Left lung (tissue), 14 donors: ENCODE measurements at regions of chr11 and their contacts with region 1.

Region 1: DNA sequence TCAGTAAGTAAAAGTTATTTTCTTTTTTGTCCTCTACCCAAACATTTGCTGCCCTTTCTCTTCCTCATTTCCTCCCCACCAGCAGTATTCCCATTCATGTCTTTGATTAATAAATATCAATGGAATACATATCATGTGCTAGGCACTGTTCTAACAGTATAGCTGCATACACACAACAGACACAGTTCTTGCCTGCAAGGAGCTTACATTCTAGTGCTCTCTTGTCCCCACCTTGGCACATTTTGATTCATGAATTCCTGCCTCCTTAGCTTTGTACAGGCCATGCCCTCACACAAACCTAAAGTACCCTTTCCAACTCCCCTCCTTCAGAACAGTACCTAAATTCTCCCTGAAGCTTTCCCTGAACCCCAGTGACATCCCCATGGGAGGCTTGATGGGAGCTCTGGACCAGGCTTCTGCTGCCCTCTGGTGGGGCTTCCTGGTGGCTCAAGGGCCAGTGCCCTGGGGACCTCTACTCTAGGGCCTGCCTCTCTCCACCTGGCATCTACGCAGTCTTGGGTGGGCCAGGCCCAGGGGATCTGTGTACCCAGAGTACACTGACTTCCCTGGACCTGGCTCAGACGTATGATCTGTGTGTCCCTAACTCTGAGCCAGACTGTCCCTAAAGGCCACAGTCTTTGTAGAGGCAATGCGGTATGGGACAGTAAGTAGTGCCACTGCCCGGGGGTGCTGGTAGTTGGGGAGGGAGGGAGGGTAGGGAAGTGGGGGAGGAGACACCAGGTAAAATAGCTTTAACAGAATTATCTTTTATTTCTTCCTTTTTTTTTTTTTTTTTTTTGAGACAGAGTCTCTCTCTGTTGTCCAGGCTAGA is 14.1 kb downstream of the RPS13 start:
- DNase-seq: peak; percentile 17 to 83 (median 48)
- ATAC-seq: peak; percentile 99
- H3K4me3 ChIP-seq: no peak overlapping the region
- H3K27ac ChIP-seq: no peak overlapping the region
- H3K4me1 ChIP-seq: no peaks in the 10 kb centered on the region
- H3K27me3 ChIP-seq: no peaks in the 10 kb centered on the region
- CTCF ChIP-seq: peak; percentile 73

Region 2: GRCh38 chr11:16945671-16946469 is 117.5 kb before region 1 on chr11:
- intact Hi-C with region 1: loop called in 1 of 2 experiments (anchors 5 kb)
- DNase-seq: peak in 2 of 4 donors; percentile 51 to 57
- ATAC-seq: peak; percentile 99
- H3K4me3 ChIP-seq: no peak overlapping the region
- H3K27ac ChIP-seq: no peak overlapping the region
- H3K4me1 ChIP-seq: no peaks in the 10 kb centered on the region
- H3K27me3 ChIP-seq: no peaks in the 10 kb centered on the region
- CTCF ChIP-seq: peak; percentile 39 to 57